ENCODE measurements at regions of chr2 and their contacts with region 1.

Region 1: GRCh38 chr2:144357623-144358373 is 162.1 kb downstream of the ZEB2 start:
- DNase-seq: peak; percentile 99
- ATAC-seq: peak; percentile 89
- H3K4me3 ChIP-seq: no peak overlapping the region
- H3K27ac ChIP-seq: no peak overlapping the region; the same call in 1 of the 2 replicates
- H3K4me1 ChIP-seq: peaks cover 11% of the 10 kb centered on the region; the same call in 1 of the 2 replicates
- H3K27me3 ChIP-seq: no peaks in the 10 kb centered on the region
- CTCF ChIP-seq: no peak
- POLR2A ChIP-seq: no peak
- RAD21 ChIP-seq: peak; percentile 19; the same call in 1 of the 2 replicates

Region 2: GRCh38 chr2:144230448-144231085 is 127.2 kb before region 1 on chr2:
- CTCF ChIA-PET with region 1: no interaction called
- POLR2A ChIA-PET with region 1: no interaction called
- dilution Hi-C with region 1: no loop called
- in situ Hi-C with region 1: no loop called
- intact Hi-C with region 1: no loop called
- DNase-seq: peak; percentile 45
- ATAC-seq: 0 out of 2 replicates have a peak, but pooled peaks have one; percentile 32
- H3K4me3 ChIP-seq: no peak overlapping the region
- H3K27ac ChIP-seq: no peak overlapping the region
- H3K4me1 ChIP-seq: peaks cover 3% of the 10 kb centered on the region; the same call in 1 of the 2 replicates
- H3K27me3 ChIP-seq: no peaks in the 10 kb centered on the region
- CTCF ChIP-seq: no peak
- POLR2A ChIP-seq: no peak
- RAD21 ChIP-seq: no peak

Region 3: DNA sequence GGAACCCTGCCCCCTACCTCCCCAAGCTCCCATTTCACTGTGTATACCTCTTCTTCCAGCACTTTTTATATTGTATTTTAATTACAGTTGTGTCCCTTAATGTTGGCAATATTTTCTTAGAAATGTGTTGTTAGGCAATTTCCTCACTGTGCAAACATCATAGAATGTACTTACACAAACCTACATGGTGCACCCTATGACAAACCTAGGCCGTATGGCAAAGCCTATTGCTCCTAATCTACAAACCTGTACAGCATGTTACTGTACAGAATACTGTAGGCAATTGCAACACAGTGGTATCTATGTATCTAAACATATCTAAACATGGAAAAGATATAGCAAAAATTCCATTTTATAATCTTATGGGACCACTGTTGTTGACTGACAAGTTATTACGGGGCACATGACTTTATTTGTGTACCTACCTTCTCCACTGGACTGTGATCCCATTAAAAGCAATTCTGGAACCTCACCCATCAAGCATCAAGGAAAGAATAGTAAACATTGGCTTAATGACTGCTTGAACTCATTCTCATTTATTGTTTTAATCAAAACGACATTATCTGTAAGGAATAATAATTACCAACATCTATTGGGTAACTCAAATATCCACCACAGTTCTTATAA is 1803.6 kb after region 1 on chr2:
- CTCF ChIA-PET with region 1: no interaction called
- POLR2A ChIA-PET with region 1: interaction called, 12 read pairs
- dilution Hi-C with region 1: no loop called
- in situ Hi-C with region 1: no loop called
- intact Hi-C with region 1: no loop called
- DNase-seq: no peak
- ATAC-seq: no peak
- H3K4me3 ChIP-seq: no peak overlapping the region
- H3K27ac ChIP-seq: no peak overlapping the region
- H3K4me1 ChIP-seq: no peaks in the 10 kb centered on the region
- H3K27me3 ChIP-seq: no peaks in the 10 kb centered on the region; the same call in 1 of the 2 replicates
- CTCF ChIP-seq: no peak
- POLR2A ChIP-seq: no peak
- RAD21 ChIP-seq: no peak